CD4-positive, alpha-beta memory T cell (primary cell): ENCODE measurements at regions of chr14 and their contacts with region 1.

Region 1: DNA sequence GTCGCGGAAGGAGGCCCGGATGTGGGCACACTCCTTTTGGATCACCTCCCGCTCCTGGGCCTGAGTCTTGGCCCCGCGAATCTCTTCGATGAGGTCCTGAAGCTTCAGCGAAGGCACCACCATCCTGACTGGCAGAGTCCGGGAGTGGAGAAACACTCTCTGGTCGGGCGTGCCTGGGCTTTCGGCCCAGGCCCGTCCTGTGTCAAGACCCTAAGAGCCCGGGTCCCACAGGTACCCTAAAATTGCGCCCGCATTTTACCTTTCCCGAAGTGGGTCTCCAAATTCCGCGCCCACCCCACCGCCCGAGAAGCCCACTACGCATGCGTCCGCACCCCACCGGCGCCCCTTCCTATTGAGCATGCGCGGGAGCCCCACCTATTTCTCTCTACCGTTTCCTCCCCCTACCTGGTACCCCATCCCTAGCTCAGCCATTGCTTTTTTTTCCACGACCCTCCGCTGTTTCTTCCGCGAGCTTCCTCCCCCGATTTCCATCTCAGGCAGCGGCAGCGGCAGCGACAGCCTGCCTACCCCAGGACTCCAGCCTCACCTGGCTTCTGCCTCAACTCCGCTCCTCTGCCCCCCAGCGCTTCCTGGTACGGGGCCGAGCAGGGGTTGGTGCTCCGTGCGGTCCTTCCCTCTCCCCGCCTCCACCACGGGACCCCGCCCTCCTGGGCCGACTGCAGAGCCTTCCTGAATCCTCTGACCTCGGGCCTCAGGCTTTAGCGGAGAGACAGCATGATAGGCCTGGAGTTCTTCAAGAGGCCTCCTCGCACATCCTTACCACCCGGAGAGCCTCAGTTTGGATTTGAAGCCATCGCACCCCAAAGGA is at the start of gene AP1G2:
- DNase-seq: peak; percentile 85 to 88 (median 86)
- H3K4me3 ChIP-seq: peak within 1 kb of the TSS; percentile 79 to 94
- H3K4me3 Mint-ChIP-seq: peak within 1 kb of the TSS; percentile 97 to 100 (median 100)
- H3K27ac ChIP-seq: peak within 1 kb of the TSS; percentile 74
- H3K27ac Mint-ChIP-seq: peak within 1 kb of the TSS; percentile 95 to 100 (median 98)
- H3K4me1 ChIP-seq: peaks cover 22% of the 10 kb centered on the region
- H3K4me1 Mint-ChIP-seq: peaks cover 22 to 55% (median 37%) of the 10 kb centered on the region in 4 donors
- H3K27me3 ChIP-seq: no peaks in the 10 kb centered on the region
- H3K27me3 Mint-ChIP-seq: peaks cover 1 to 2% of the 10 kb centered on the region in 2 donors
- total RNA-seq, gene AP1G2: 492 to 498 TPM

Region 2: DNA sequence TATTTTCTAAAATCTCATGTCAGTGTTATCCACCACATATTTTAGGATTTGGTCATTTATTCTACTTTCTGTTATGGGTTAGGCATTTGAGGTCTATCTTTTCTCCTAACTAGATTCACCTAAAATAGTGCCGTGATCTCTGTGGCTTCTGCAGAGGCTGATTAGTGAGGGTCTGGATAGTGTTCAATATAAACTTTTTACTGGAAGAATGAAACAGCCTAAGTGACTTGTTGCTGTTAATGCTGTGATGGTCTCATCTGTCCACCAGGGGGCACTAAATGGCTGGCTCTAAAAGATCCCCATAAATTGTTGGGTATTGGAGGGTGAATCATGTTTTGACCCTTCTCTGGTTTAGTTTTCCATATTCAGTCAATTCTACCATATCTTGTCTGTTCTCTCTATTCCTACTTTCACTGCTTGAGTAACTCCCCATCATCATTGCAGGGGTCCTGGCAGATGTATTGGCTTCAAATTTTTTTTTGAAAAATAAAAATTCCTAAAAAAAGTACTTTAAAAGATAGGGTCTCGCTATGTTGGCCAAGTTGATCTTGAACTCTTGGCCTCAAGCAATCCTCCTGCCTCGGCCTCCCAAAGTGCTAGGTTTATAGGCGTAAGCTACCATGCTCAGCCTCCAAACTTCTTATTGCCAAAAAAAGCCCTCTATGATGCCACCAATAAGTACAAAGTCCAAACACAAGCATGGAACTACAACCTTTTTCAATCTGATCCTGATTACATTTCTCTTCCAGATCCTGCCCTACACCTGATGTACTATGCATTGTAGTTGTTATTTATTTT is 239.3 kb before region 1 on chr14:
- CTCF ChIA-PET with region 1: no interaction called
- POLR2A ChIA-PET with region 1: no interaction called
- intact Hi-C with region 1: loop called (anchors 2 kb)
- DNase-seq: peak; percentile 48 to 64 (median 60)
- H3K4me3 ChIP-seq: no peak overlapping the region
- H3K4me3 Mint-ChIP-seq: no peak overlapping the region
- H3K27ac ChIP-seq: no peak overlapping the region
- H3K27ac Mint-ChIP-seq: peak overlapping the region in 2 of 7 donors; percentile 28 to 60
- H3K4me1 ChIP-seq: peaks cover 9% of the 10 kb centered on the region
- H3K4me1 Mint-ChIP-seq: peaks cover 3 to 8% (median 5%) of the 10 kb centered on the region in 4 donors
- H3K27me3 ChIP-seq: no peaks in the 10 kb centered on the region
- H3K27me3 Mint-ChIP-seq: peaks cover 0 to 2% of the 10 kb centered on the region in 2 donors

Region 3: DNA sequence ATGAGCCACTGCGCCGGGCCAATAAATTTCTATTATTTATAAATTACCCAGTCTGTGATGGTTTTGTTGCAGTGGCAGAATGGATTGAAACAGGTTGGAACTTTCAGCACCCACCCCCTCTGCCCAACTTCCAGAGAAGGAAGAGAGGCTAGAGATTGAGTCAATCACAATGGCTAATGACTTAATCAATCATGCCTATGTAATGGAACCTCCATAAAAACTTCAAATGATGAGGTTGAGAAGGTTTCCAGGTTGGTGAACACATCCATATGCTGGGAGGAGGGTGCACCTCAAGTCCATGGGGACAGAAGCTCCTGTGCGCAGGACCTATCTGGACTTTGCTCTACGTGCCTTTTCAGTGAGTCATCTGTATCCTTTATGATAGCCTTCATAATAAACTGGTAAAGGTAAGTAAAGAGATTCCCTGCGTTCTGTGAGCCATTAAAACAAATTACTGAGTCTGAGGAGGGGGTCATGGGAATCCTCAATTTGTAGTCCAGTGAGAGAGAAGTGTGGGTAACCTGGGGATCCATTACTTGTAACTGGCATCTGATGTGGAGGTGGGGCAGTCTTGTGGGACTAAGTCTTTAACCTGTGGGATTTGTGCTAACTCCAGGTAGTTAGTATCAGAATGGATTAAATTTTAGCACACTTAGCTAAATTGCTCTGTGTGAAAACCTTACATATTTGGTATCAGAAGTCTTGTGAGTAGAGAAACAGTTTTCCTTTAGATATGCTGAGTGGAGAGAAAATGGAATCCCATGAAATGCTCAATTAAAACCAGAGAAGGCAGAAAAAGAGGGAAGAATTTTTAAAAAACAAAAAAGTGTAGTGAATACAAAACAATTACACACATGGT is 109.6 kb before region 1 on chr14:
- CTCF ChIA-PET with region 1: no interaction called
- POLR2A ChIA-PET with region 1: no interaction called
- intact Hi-C with region 1: no loop called
- DNase-seq: no peak
- H3K4me3 ChIP-seq: no peak overlapping the region
- H3K4me3 Mint-ChIP-seq: no peak overlapping the region
- H3K27ac ChIP-seq: no peak overlapping the region
- H3K27ac Mint-ChIP-seq: no peak overlapping the region
- H3K4me1 ChIP-seq: no peaks in the 10 kb centered on the region
- H3K4me1 Mint-ChIP-seq: no peaks in the 10 kb centered on the region
- H3K27me3 ChIP-seq: peaks cover 3% of the 10 kb centered on the region
- H3K27me3 Mint-ChIP-seq: peaks cover 26 to 31% of the 10 kb centered on the region in 2 donors

Region 4: GRCh38 chr14:23469127-23469905 is 98.1 kb before region 1 on chr14 and contains the start of gene NGDN:
- CTCF ChIA-PET with region 1: interaction called, 174 read pairs
- POLR2A ChIA-PET with region 1: interaction called, 3 read pairs
- intact Hi-C with region 1: loop called (anchors 2 kb)
- DNase-seq: peak; percentile 93 to 99 (median 97)
- H3K4me3 ChIP-seq: peak within 1 kb of the TSS; percentile 75 to 78
- H3K4me3 Mint-ChIP-seq: peak within 1 kb of the TSS in 1 of 8 donors; percentile 35
- H3K27ac ChIP-seq: peak within 1 kb of the TSS; percentile 89
- H3K27ac Mint-ChIP-seq: peak within 1 kb of the TSS in 3 of 7 donors; percentile 36 to 78 (median 43)
- H3K4me1 ChIP-seq: peaks cover 17% of the 10 kb centered on the region
- H3K4me1 Mint-ChIP-seq: peaks cover 0 to 7% (median 6%) of the 10 kb centered on the region in 4 donors
- H3K27me3 ChIP-seq: no peaks in the 10 kb centered on the region
- H3K27me3 Mint-ChIP-seq: no peaks in the 10 kb centered on the region
- total RNA-seq, gene NGDN: 60.7 to 63.5 TPM

Region 5: GRCh38 chr14:23478111-23478759 is 89.2 kb before region 1 on chr14:
- CTCF ChIA-PET with region 1: interaction called, 174 read pairs
- POLR2A ChIA-PET with region 1: interaction called, 19 read pairs
- intact Hi-C with region 1: loop called (anchors 1 kb)
- DNase-seq: peak; percentile 67 to 73 (median 71)
- H3K4me3 ChIP-seq: no peak overlapping the region
- H3K4me3 Mint-ChIP-seq: no peak overlapping the region
- H3K27ac ChIP-seq: no peak overlapping the region
- H3K27ac Mint-ChIP-seq: peak overlapping the region in 4 of 7 donors; percentile 0 to 83 (median 28)
- H3K4me1 ChIP-seq: peaks cover 8% of the 10 kb centered on the region
- H3K4me1 Mint-ChIP-seq: peaks cover 4 to 12% (median 5%) of the 10 kb centered on the region in 4 donors
- H3K27me3 ChIP-seq: no peaks in the 10 kb centered on the region
- H3K27me3 Mint-ChIP-seq: no peaks in the 10 kb centered on the region

Region 6: DNA sequence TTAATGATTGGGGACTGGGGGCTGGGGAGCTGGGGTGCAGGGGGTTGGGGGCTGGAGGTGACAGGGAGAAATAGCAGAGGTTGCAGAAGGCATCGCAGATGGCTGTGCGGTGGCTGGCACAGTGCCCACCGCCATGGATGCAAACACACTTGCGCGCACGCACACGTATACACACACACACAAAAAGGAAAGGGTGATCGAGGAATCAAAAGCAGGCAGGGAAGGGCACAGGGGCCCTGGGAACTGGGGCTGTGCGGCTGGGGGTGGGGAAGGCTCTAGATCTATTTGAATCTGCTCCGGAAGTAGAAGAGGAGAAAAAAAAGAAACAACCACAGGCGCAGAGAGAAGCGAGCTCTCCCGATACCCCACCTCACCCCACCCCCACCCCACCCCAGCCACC is 55.2 kb before region 1 on chr14:
- CTCF ChIA-PET with region 1: no interaction called
- POLR2A ChIA-PET with region 1: no interaction called
- intact Hi-C with region 1: no loop called
- DNase-seq: peak in 3 of 5 donors; percentile 1 to 3 (median 2)
- H3K4me3 ChIP-seq: no peak overlapping the region
- H3K4me3 Mint-ChIP-seq: peak overlapping the region; percentile 71 to 89 (median 82)
- H3K27ac ChIP-seq: no peak overlapping the region
- H3K27ac Mint-ChIP-seq: peak overlapping the region in 3 of 7 donors; percentile 21 to 62 (median 52)
- H3K4me1 ChIP-seq: peaks cover 5% of the 10 kb centered on the region
- H3K4me1 Mint-ChIP-seq: peaks cover 2 to 11% (median 6%) of the 10 kb centered on the region in 4 donors
- H3K27me3 ChIP-seq: no peaks in the 10 kb centered on the region
- H3K27me3 Mint-ChIP-seq: no peaks in the 10 kb centered on the region

Region 7: DNA sequence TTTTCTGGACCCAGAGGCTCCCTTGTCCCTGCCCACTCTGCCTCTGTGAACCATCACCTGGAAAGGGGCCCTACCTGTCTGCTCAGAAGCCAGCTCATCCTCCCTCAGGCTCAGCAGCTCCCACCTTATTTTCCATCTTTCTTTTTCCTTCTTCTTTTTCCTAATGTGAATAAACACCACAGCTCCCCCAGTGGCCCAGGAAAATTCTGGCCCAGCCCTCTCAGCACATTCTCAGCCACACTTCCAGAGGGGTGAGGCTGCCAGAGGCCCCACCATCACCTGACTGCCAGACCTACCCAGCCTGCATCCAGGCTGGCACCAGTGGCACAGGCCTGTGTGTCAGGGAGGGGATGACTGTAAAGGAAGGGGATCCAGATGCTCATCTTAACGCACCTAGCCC is 38.9 kb before region 1 on chr14:
- CTCF ChIA-PET with region 1: no interaction called
- POLR2A ChIA-PET with region 1: no interaction called
- intact Hi-C with region 1: no loop called
- DNase-seq: no peak
- H3K4me3 ChIP-seq: no peak overlapping the region
- H3K4me3 Mint-ChIP-seq: no peak overlapping the region
- H3K27ac ChIP-seq: no peak overlapping the region
- H3K27ac Mint-ChIP-seq: no peak overlapping the region
- H3K4me1 ChIP-seq: no peaks in the 10 kb centered on the region
- H3K4me1 Mint-ChIP-seq: no peaks in the 10 kb centered on the region
- H3K27me3 ChIP-seq: no peaks in the 10 kb centered on the region
- H3K27me3 Mint-ChIP-seq: no peaks in the 10 kb centered on the region

Region 8: GRCh38 chr14:23548351-23549318 is 18.8 kb before region 1 on chr14:
- CTCF ChIA-PET with region 1: interaction called, 83 read pairs
- POLR2A ChIA-PET with region 1: interaction called, 17 read pairs
- intact Hi-C with region 1: no loop called
- DNase-seq: no peak
- H3K4me3 ChIP-seq: no peak overlapping the region
- H3K4me3 Mint-ChIP-seq: no peak overlapping the region
- H3K27ac ChIP-seq: no peak overlapping the region
- H3K27ac Mint-ChIP-seq: no peak overlapping the region
- H3K4me1 ChIP-seq: peaks cover 15% of the 10 kb centered on the region
- H3K4me1 Mint-ChIP-seq: peaks cover 2 to 11% (median 4%) of the 10 kb centered on the region in 4 donors
- H3K27me3 ChIP-seq: no peaks in the 10 kb centered on the region
- H3K27me3 Mint-ChIP-seq: peaks cover 0 to 2% of the 10 kb centered on the region in 2 donors

Region 9: GRCh38 chr14:23793532-23793931 is 226.1 kb after region 1 on chr14:
- CTCF ChIA-PET with region 1: no interaction called
- POLR2A ChIA-PET with region 1: no interaction called
- intact Hi-C with region 1: no loop called
- DNase-seq: no peak
- H3K4me3 ChIP-seq: no peak overlapping the region
- H3K4me3 Mint-ChIP-seq: no peak overlapping the region
- H3K27ac ChIP-seq: no peak overlapping the region
- H3K27ac Mint-ChIP-seq: no peak overlapping the region
- H3K4me1 ChIP-seq: no peaks in the 10 kb centered on the region
- H3K4me1 Mint-ChIP-seq: no peaks in the 10 kb centered on the region
- H3K27me3 ChIP-seq: no peaks in the 10 kb centered on the region
- H3K27me3 Mint-ChIP-seq: peaks cover 17 to 25% of the 10 kb centered on the region in 2 donors